ENCODE measurements at regions of chr10 and their contacts with region 1.

Region 1: DNA sequence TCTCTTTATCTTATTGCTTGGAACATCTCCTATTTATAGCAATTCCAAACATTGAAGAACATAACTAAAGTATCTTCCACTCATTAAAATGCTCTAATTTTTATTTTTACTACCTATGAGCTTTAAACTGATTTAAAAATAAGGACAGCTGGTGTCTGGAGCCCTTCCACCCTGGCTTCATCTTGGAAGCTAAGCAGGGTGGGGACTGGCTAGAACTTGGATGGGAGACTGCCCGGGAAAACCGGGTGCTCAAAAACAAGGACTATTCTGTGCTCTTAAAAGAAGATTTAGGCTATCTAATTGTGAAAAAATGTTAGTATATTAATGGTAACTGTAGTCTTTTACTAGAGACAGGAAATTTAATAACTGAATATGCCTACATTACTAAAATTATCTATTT is 69.2 kb downstream of the ARMC3 start:
- DNase-seq: peak in 1 of 5 donors; percentile 36
- H3K4me3 ChIP-seq: no peak overlapping the region
- H3K27ac ChIP-seq: no peak overlapping the region
- H3K4me1 ChIP-seq: no peaks in the 10 kb centered on the region
- H3K27me3 ChIP-seq: no peaks in the 10 kb centered on the region
- CTCF ChIP-seq: no peak
- EP300 ChIP-seq: no peak
- POLR2A ChIP-seq: no peak

Region 2: GRCh38 chr10:21989453-21990154 is 1007.5 kb before region 1 on chr10:
- intact Hi-C with region 1: loop called in 1 of 4 experiments (anchors 10 kb)
- DNase-seq: peak; percentile 28 to 77 (median 43)
- H3K4me3 ChIP-seq: no peak overlapping the region
- H3K27ac ChIP-seq: no peak overlapping the region
- H3K4me1 ChIP-seq: no peaks in the 10 kb centered on the region
- H3K27me3 ChIP-seq: no peaks in the 10 kb centered on the region
- CTCF ChIP-seq: no peak
- EP300 ChIP-seq: no peak
- POLR2A ChIP-seq: no peak

Region 3: DNA sequence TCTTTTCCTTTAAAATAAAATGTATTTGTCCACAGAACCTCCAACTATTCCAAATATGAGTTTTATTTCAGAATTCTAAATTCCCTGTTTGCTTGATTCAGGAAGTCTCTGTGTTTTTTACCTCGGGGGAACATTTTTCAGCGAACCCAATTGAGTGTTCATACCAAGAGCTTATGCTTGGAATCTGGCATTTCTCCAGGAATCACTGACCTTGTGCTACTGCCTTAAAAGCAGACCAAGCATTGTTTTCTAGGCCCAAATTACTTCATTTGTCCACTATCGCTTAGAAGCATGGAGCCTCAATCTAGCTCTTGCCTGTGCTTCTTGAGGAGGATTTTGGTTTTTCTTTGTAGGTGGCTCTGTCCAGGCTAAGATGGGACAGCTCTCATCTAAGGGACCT is 838.7 kb before region 1 on chr10:
- intact Hi-C with region 1: no loop called
- DNase-seq: no peak
- H3K4me3 ChIP-seq: no peak overlapping the region
- H3K27ac ChIP-seq: no peak overlapping the region
- H3K4me1 ChIP-seq: no peaks in the 10 kb centered on the region
- H3K27me3 ChIP-seq: no peaks in the 10 kb centered on the region
- CTCF ChIP-seq: no peak
- EP300 ChIP-seq: no peak
- POLR2A ChIP-seq: no peak